Mammary epithelial cell (primary cell): ENCODE measurements at regions of chr16 and their contacts with region 1.

Region 1: GRCh38 chr16:26550111-26550610 is 516.6 kb upstream of the C16orf82 start:
- DNase-seq: no peak
- H3K4me3 ChIP-seq: no peak overlapping the region
- H3K27ac ChIP-seq: no peak overlapping the region
- H3K4me1 ChIP-seq: no peaks in the 10 kb centered on the region
- H3K27me3 ChIP-seq: no peaks in the 10 kb centered on the region
- CTCF ChIP-seq: no peak

Region 2: GRCh38 chr16:26247063-26247462 is 303.1 kb before region 1 on chr16:
- CTCF ChIA-PET with region 1: no interaction called
- dilution Hi-C with region 1: no loop called
- in situ Hi-C with region 1: no loop called
- intact Hi-C with region 1: no loop called
- DNase-seq: no peak
- H3K4me3 ChIP-seq: no peak overlapping the region
- H3K27ac ChIP-seq: no peak overlapping the region
- H3K4me1 ChIP-seq: no peaks in the 10 kb centered on the region
- H3K27me3 ChIP-seq: no peaks in the 10 kb centered on the region
- CTCF ChIP-seq: no peak

Region 3: GRCh38 chr16:26453215-26453614 is 96.9 kb before region 1 on chr16:
- CTCF ChIA-PET with region 1: no interaction called
- dilution Hi-C with region 1: loop called (anchors 5 kb)
- in situ Hi-C with region 1: no loop called
- intact Hi-C with region 1: no loop called
- DNase-seq: no peak
- H3K4me3 ChIP-seq: no peak overlapping the region
- H3K27ac ChIP-seq: no peak overlapping the region
- H3K4me1 ChIP-seq: no peaks in the 10 kb centered on the region
- H3K27me3 ChIP-seq: no peaks in the 10 kb centered on the region
- CTCF ChIP-seq: no peak

Region 4: DNA sequence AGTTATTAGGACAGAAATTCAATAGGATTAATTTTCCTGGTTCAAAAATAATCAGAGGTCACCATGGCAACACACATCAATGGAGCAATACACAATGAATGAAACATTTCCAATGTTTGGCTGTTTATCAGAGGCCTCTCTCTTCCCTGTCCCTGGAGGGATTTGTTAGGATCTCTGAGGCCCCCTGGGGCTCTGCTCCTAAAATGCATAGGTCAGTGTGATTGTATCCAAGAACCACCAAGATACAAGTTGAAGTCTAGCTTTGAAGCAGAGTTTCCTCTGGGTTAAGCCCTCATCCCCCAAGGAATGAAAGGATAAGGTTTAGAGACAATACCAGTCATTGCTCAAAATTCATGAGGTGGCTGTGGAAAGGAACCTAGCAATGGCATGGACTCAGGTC is 44.7 kb before region 1 on chr16:
- CTCF ChIA-PET with region 1: no interaction called
- dilution Hi-C with region 1: loop called (anchors 5 kb)
- in situ Hi-C with region 1: no loop called
- intact Hi-C with region 1: no loop called
- DNase-seq: no peak
- H3K4me3 ChIP-seq: no peak overlapping the region
- H3K27ac ChIP-seq: no peak overlapping the region
- H3K4me1 ChIP-seq: no peaks in the 10 kb centered on the region
- H3K27me3 ChIP-seq: no peaks in the 10 kb centered on the region
- CTCF ChIP-seq: no peak

Region 5: GRCh38 chr16:26605626-26606271 is 55.6 kb after region 1 on chr16:
- CTCF ChIA-PET with region 1: no interaction called
- dilution Hi-C with region 1: loop called (anchors 5 kb)
- in situ Hi-C with region 1: no loop called
- intact Hi-C with region 1: no loop called
- DNase-seq: no peak
- H3K4me3 ChIP-seq: no peak overlapping the region
- H3K27ac ChIP-seq: no peak overlapping the region
- H3K4me1 ChIP-seq: no peaks in the 10 kb centered on the region
- H3K27me3 ChIP-seq: no peaks in the 10 kb centered on the region
- CTCF ChIP-seq: no peak